CD4-positive, alpha-beta T cell (primary cell): ENCODE measurements at regions of chr7 and their contacts with region 1.

Region 1: DNA sequence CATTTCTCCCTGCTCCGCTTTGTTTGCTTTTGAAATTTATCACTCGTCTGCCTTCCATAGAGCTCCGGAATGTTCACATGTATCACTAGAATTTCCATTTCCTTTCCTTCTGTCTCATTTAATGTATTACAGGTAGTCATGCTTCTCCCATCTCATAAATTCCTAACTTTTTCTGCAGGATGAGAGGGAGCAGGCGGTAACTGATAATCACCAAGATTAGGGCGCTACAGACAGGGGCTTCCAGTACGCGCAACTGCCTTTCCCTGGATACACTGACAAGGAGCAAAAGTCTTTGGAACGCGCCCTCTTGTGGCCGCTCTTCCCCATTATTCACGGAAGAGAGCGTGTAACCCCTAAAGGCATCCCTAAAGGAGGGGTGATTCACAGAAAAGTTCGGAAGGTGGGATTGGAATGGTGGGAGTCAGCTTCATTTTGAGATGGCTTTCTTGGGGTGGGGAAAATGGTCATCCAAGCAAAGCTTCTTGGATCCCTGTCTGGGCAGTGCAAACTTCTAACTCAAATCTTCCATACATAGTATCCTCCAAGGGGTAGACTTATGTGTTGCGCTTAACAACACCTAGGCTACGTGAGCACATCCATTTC is 6.5 kb downstream of the INHBA start:
- DNase-seq: peak in 3 of 14 experiments; percentile 8 to 34 (median 29)
- ATAC-seq: no peak
- H3K4me3 ChIP-seq: no peak overlapping the region
- H3K4me3 Mint-ChIP-seq: no peak overlapping the region
- H3K27ac ChIP-seq: no peak overlapping the region
- H3K27ac Mint-ChIP-seq: no peak overlapping the region
- H3K4me1 ChIP-seq: no peaks in the 10 kb centered on the region
- H3K4me1 Mint-ChIP-seq: peaks cover 4% of the 10 kb centered on the region
- H3K27me3 ChIP-seq: peaks cover 14 to 23% of the 10 kb centered on the region in 2 experiments
- H3K27me3 Mint-ChIP-seq: peaks cover 60% of the 10 kb centered on the region
- CTCF ChIP-seq: no peak

Region 2: GRCh38 chr7:40232242-40232893 is 1464.0 kb before region 1 on chr7:
- CTCF ChIA-PET with region 1: no interaction called
- POLR2A ChIA-PET with region 1: no interaction called
- intact Hi-C with region 1: loop called in 1 of 2 experiments (anchors 5 kb)
- DNase-seq: peak in 3 of 14 experiments; percentile 7 to 35 (median 30)
- ATAC-seq: no peak
- H3K4me3 ChIP-seq: no peak overlapping the region
- H3K4me3 Mint-ChIP-seq: no peak overlapping the region
- H3K27ac ChIP-seq: no peak overlapping the region
- H3K27ac Mint-ChIP-seq: no peak overlapping the region
- H3K4me1 ChIP-seq: no peaks in the 10 kb centered on the region
- H3K4me1 Mint-ChIP-seq: peaks cover 6% of the 10 kb centered on the region
- H3K27me3 ChIP-seq: no peaks in the 10 kb centered on the region
- H3K27me3 Mint-ChIP-seq: no peaks in the 10 kb centered on the region
- CTCF ChIP-seq: peak; percentile 14

Region 3: DNA sequence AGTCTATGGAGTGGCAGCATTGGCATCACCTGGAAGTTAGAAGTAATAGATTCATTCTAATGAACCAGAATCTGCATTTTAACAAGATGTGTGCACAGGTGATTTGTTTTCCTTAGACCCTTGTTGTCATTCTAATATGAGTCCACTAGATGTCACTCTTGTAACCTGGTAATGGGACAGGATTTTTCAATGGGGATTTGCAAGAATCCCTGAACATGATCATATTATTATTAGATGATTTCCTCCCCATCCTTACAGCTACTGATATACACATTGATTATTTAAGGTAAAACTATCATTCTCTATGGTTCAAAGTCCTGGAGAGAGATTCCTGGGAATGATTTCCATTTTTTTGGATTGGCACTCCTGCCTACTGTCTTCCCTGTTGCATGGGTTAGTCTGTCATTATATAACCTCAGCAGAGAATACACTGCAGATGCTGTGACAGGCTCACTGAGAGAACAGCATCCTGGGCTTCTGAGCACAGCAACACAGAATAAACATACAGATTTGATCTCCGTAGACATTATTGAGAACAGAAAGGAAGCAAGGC is 1366.7 kb before region 1 on chr7:
- CTCF ChIA-PET with region 1: no interaction called
- POLR2A ChIA-PET with region 1: no interaction called
- intact Hi-C with region 1: loop called in 1 of 2 experiments (anchors 5 kb)
- DNase-seq: peak in 3 of 14 experiments; percentile 27 to 38 (median 34)
- ATAC-seq: no peak
- H3K4me3 ChIP-seq: no peak overlapping the region
- H3K4me3 Mint-ChIP-seq: no peak overlapping the region
- H3K27ac ChIP-seq: no peak overlapping the region
- H3K27ac Mint-ChIP-seq: no peak overlapping the region
- H3K4me1 ChIP-seq: no peaks in the 10 kb centered on the region
- H3K4me1 Mint-ChIP-seq: no peaks in the 10 kb centered on the region
- H3K27me3 ChIP-seq: no peaks in the 10 kb centered on the region
- H3K27me3 Mint-ChIP-seq: no peaks in the 10 kb centered on the region
- CTCF ChIP-seq: peak; percentile 76

Region 4: GRCh38 chr7:41277561-41277960 is 418.9 kb before region 1 on chr7:
- CTCF ChIA-PET with region 1: no interaction called
- POLR2A ChIA-PET with region 1: no interaction called
- intact Hi-C with region 1: no loop called
- DNase-seq: no peak
- ATAC-seq: no peak
- H3K4me3 ChIP-seq: no peak overlapping the region
- H3K4me3 Mint-ChIP-seq: no peak overlapping the region
- H3K27ac ChIP-seq: no peak overlapping the region
- H3K27ac Mint-ChIP-seq: no peak overlapping the region
- H3K4me1 ChIP-seq: no peaks in the 10 kb centered on the region
- H3K4me1 Mint-ChIP-seq: no peaks in the 10 kb centered on the region
- H3K27me3 ChIP-seq: no peaks in the 10 kb centered on the region
- H3K27me3 Mint-ChIP-seq: peaks cover 2% of the 10 kb centered on the region
- CTCF ChIP-seq: no peak

Region 5: GRCh38 chr7:41630741-41631140 is 65.7 kb before region 1 on chr7:
- CTCF ChIA-PET with region 1: no interaction called
- POLR2A ChIA-PET with region 1: no interaction called
- intact Hi-C with region 1: no loop called
- DNase-seq: peak in 1 of 14 experiments; percentile 13
- ATAC-seq: no peak
- H3K4me3 ChIP-seq: no peak overlapping the region
- H3K4me3 Mint-ChIP-seq: no peak overlapping the region
- H3K27ac ChIP-seq: no peak overlapping the region
- H3K27ac Mint-ChIP-seq: no peak overlapping the region
- H3K4me1 ChIP-seq: no peaks in the 10 kb centered on the region
- H3K4me1 Mint-ChIP-seq: no peaks in the 10 kb centered on the region
- H3K27me3 ChIP-seq: no peaks in the 10 kb centered on the region
- H3K27me3 Mint-ChIP-seq: no peaks in the 10 kb centered on the region
- CTCF ChIP-seq: no peak

Region 6: DNA sequence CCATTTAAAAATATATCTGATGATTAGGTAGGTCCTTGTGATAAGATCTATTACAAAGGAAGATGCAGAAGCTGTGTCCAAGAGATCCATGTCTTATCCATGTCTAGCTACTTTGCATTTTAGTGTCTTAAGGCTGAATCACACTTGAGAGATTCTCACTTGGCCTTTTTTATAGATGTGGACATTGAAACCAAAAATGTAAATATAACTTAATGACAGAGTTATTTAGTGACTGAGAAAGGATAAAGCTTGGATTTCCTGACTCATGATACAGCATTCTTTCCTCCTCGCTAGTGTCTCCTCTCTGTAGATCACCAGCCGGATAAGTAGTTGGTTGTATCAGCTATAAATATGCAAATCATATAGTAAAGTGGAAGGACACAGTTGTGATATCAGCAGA is 16.8 kb before region 1 on chr7:
- CTCF ChIA-PET with region 1: no interaction called
- POLR2A ChIA-PET with region 1: no interaction called
- intact Hi-C with region 1: no loop called
- DNase-seq: no peak
- ATAC-seq: no peak
- H3K4me3 ChIP-seq: no peak overlapping the region
- H3K4me3 Mint-ChIP-seq: no peak overlapping the region
- H3K27ac ChIP-seq: no peak overlapping the region
- H3K27ac Mint-ChIP-seq: no peak overlapping the region
- H3K4me1 ChIP-seq: no peaks in the 10 kb centered on the region
- H3K4me1 Mint-ChIP-seq: no peaks in the 10 kb centered on the region
- H3K27me3 ChIP-seq: no peaks in the 10 kb centered on the region
- H3K27me3 Mint-ChIP-seq: no peaks in the 10 kb centered on the region
- CTCF ChIP-seq: no peak

Region 7: GRCh38 chr7:43105521-43106120 is 1409.2 kb after region 1 on chr7:
- CTCF ChIA-PET with region 1: no interaction called
- POLR2A ChIA-PET with region 1: no interaction called
- intact Hi-C with region 1: no loop called
- DNase-seq: no peak
- ATAC-seq: no peak
- H3K4me3 ChIP-seq: no peak overlapping the region
- H3K4me3 Mint-ChIP-seq: no peak overlapping the region
- H3K27ac ChIP-seq: no peak overlapping the region
- H3K27ac Mint-ChIP-seq: no peak overlapping the region
- H3K4me1 ChIP-seq: no peaks in the 10 kb centered on the region
- H3K4me1 Mint-ChIP-seq: no peaks in the 10 kb centered on the region
- H3K27me3 ChIP-seq: peaks cover 11 to 46% of the 10 kb centered on the region in 2 experiments
- H3K27me3 Mint-ChIP-seq: peaks cover 51% of the 10 kb centered on the region
- CTCF ChIP-seq: no peak